PC-3 (cell line): ENCODE measurements at regions of chr21 and their contacts with region 1.

Region 1: GRCh38 chr21:26632691-26633090 is 59.6 kb upstream of the CYYR1 start:
- DNase-seq: no peak
- ATAC-seq: no peak
- H3K4me3 ChIP-seq: no peak overlapping the region
- H3K27ac ChIP-seq: no peak overlapping the region
- H3K4me1 ChIP-seq: 0 out of 2 replicates have a peak, but pooled peaks cover 6% of the 10 kb centered on the region
- H3K27me3 ChIP-seq: no peaks in the 10 kb centered on the region
- CTCF ChIP-seq: no peak

Region 2: GRCh38 chr21:26320596-26320995 is 312.1 kb before region 1 on chr21:
- CTCF ChIA-PET with region 1: no interaction called
- POLR2A ChIA-PET with region 1: interaction called, 16 read pairs
- intact Hi-C with region 1: no loop called
- DNase-seq: no peak
- ATAC-seq: no peak
- H3K4me3 ChIP-seq: no peak overlapping the region
- H3K27ac ChIP-seq: no peak overlapping the region
- H3K4me1 ChIP-seq: no peaks in the 10 kb centered on the region
- H3K27me3 ChIP-seq: no peaks in the 10 kb centered on the region
- CTCF ChIP-seq: no peak

Region 3: DNA sequence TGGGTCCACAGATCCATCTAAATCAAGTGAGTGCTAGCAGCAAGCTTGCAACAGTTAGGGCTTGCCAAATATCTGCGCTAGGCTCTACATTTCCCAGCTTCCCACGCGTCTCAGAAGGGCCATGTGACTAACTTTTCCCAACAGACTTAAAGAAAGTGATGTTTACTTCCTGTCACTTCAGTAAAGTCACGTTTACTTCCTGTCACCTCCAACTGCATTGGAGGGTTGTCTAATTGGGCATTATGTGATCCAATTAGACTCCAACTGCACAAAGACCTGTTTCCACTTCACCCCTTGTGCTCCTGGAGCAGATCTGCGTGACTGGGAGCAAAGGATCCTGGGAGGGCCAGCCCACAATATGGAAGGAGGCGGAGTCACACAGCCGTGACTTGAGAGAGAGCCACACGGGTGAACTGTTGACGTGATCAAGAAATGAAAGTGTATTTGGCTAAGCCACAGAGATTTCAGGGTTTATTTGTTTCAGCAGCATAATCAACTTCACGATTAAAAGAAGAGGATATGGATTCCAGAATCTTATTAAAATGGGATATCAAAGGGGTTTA is 137.3 kb before region 1 on chr21:
- CTCF ChIA-PET with region 1: no interaction called
- POLR2A ChIA-PET with region 1: no interaction called
- intact Hi-C with region 1: no loop called
- DNase-seq: no peak
- ATAC-seq: no peak
- H3K4me3 ChIP-seq: no peak overlapping the region
- H3K27ac ChIP-seq: no peak overlapping the region
- H3K4me1 ChIP-seq: no peaks in the 10 kb centered on the region
- H3K27me3 ChIP-seq: no peaks in the 10 kb centered on the region
- CTCF ChIP-seq: no peak